ENCODE measurements at regions of chr5 and their contacts with region 1.

Region 1: DNA sequence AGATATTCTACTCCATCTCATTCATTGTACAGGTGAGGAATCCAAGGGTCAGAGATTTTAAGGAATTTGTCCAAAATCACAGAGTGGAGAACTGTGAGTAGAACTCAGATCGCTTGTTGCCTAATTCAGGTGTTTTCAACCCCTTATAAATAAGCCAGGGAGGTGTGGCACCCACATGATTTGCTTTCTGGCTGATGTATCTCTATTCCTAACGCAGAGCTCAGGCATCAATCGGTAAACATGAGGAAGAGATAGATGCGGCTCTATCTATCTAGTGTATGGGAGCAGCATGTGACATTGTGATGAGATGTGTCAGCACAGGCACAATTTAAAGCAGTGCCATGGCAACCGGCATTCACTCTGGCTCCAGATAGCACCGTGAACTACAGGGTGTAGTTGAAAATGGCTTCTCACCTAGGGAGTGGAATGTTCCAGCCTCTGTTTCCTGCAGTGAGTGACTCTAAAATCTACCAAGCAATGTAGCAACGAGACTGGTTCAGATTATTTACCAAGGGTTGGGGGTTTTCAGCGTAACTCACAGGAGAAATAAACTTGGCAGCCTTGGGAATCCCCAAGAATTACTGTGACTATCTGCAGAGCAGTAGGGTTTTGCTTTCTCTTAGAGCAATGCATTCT is 53.4 kb upstream of the SUB1 start:
- DNase-seq: peak; percentile 45
- H3K4me3 Mint-ChIP-seq: peak overlapping the region; percentile 88
- H3K27ac Mint-ChIP-seq: peak overlapping the region; percentile 96
- H3K4me1 Mint-ChIP-seq: peaks cover 48% of the 10 kb centered on the region
- H3K27me3 Mint-ChIP-seq: no peaks in the 10 kb centered on the region

Region 2: DNA sequence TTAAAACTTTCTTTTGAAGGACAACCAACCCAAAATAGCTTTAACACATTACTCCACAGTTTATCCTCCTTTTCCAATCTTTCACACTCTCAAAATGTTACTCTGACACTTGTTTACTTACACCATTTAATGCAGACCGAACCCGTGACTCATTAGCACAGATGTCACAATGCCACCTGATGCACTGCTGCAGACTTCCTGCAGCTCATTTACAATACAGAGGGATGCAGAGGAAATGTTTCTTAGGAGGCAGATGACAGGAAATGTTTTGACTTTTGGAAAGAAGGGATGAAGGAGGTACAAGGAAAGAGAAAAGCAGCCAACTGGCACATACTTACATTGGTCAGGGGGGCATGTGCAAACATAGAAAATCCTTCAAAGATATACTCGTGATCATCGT is 1039.1 kb before region 1 on chr5:
- intact Hi-C with region 1: no loop called
- DNase-seq: no peak
- H3K4me3 Mint-ChIP-seq: no peak overlapping the region
- H3K27ac Mint-ChIP-seq: no peak overlapping the region
- H3K4me1 Mint-ChIP-seq: no peaks in the 10 kb centered on the region
- H3K27me3 Mint-ChIP-seq: no peaks in the 10 kb centered on the region

Region 3: DNA sequence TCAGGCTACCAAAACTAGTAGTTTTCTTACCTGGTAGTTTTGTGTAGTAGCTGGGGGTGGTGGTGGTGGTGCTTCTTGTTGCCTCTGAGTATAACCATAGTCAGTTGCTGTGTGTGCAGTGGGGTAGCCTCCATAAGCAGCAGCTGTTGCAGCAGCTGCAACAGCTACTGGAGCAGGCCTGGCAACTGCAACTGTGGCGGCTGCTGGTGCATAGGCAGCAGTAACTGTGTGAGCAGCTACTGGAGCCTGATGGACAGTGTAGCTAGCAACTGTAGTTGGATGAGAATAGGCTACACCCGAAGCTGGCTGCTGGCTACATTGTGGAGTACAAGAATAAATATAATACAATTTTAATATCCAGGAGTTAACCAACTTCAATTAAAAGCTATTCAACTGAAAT is 112.2 kb before region 1 on chr5:
- intact Hi-C with region 1: no loop called
- DNase-seq: no peak
- H3K4me3 Mint-ChIP-seq: no peak overlapping the region
- H3K27ac Mint-ChIP-seq: no peak overlapping the region
- H3K4me1 Mint-ChIP-seq: peaks cover 15% of the 10 kb centered on the region
- H3K27me3 Mint-ChIP-seq: no peaks in the 10 kb centered on the region

Region 4: GRCh38 chr5:32444431-32445286 is 87.3 kb before region 1 on chr5 and contains the start of gene ZFR:
- intact Hi-C with region 1: loop called (anchors 5 kb)
- DNase-seq: peak; percentile 91
- H3K4me3 Mint-ChIP-seq: peak within 1 kb of the TSS; percentile 93
- H3K27ac Mint-ChIP-seq: peak within 1 kb of the TSS; percentile 93
- H3K4me1 Mint-ChIP-seq: peaks cover 30% of the 10 kb centered on the region
- H3K27me3 Mint-ChIP-seq: peaks cover 17% of the 10 kb centered on the region
- total RNA-seq, gene ZFR: 68.6 and 69.2 TPM in 2 replicates

Region 5: DNA sequence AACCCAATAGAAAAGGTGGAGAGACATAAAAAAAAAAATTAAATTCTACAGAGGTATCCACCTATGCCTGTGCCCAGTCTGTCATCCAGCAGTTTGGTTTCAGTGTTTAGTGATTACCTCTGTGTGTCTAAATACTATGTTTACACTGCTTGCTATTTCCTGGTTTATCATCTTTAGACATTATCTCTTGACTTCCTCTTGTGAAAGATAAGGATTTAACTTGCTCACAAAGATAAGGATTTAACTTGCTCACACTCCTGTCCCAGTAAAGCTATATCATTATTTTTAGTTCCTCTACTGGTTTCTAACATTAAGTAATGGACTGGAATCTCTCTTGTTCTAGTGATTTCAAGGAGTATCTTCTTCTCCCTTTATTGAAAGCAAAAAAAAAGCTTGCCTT is 33.5 kb before region 1 on chr5:
- intact Hi-C with region 1: loop called (anchors 5 kb)
- DNase-seq: no peak
- H3K4me3 Mint-ChIP-seq: no peak overlapping the region
- H3K27ac Mint-ChIP-seq: no peak overlapping the region
- H3K4me1 Mint-ChIP-seq: peaks cover 14% of the 10 kb centered on the region
- H3K27me3 Mint-ChIP-seq: no peaks in the 10 kb centered on the region

Region 6: DNA sequence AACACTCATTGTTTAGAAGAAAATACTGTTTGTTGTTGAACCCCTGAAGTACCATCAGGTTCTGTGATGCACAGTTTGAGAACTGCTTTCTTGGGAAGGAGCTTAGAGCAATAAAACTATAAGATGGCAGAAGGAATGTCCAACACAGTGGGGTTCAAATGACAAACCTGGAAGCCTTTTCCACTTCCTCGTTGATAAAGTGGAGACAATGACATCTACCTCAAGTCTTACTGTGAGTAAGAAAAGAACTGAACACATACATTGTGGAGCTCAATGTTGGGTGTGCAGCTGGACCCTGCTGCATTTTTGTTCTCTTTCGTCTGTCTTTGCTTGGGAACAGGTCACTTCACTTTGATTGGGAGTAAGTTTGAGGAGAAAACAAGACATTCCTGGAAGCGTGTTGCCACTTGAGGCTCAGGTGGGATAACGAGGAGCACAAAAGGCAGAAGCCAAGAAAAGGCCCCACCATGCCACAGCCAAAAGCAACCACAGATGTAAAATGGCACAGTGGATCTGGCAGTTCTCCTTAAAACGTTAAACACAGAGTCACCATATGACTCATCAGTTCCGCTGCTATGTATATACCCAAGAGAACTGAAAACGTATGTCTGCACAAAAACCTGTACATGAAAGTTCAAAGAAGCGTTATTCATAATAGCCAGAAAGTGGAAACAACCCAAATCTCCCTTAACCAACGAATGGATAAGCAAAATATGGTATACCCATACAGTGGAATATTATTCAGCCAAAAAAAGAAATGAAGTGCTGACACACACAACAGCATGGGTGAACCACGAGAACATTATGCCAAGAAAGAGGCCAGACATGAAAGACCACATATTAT is 10.4 kb after region 1 on chr5:
- intact Hi-C with region 1: loop called (anchors 1 kb)
- DNase-seq: peak; percentile 41
- H3K4me3 Mint-ChIP-seq: peak overlapping the region; percentile 54
- H3K27ac Mint-ChIP-seq: peak overlapping the region; percentile 96
- H3K4me1 Mint-ChIP-seq: peaks cover 45% of the 10 kb centered on the region
- H3K27me3 Mint-ChIP-seq: no peaks in the 10 kb centered on the region

Region 7: DNA sequence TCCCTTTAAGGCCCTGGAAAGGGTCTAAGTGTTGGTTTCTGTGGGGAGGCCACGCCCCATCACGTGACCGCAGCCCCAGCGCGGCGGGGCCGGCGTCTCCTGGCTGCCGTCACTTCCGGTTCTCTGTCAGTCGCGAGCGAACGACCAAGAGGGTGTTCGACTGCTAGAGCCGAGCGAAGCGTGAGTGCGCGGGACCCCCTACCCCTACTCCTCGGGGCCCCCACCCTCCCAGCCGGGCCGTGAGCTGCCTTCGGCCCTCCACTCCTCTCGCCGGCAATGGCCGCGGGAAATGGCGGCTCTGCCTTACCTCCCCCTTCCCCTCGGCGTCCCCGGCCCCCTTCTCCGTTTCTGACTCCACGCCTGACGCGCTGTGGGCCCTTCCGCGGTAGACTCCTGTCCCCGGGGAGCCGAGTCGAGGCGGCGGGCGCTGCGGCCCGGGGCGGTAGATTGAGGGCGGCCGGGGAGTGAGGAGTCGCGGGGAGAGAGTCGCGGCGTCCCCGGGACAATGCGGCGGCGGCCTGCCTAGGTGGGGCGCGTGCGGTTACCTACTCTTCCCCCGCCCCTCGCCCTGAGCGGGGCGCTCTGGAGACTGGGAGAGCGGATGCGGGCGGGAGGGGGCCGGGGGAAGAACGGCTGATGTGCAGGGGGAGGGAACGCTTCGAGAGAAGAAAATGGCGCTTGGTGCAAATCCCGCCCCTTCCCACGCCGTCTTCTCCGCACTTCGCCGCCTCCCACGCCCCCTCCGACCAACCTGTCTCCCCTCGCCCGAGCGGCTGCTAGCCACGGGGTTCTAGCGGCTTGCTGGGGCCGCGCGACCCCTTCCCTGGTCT is 53.7 kb after region 1 on chr5 and contains the start of gene SUB1:
- intact Hi-C with region 1: loop called (anchors 1 kb)
- DNase-seq: peak; percentile 90
- H3K4me3 Mint-ChIP-seq: peak within 1 kb of the TSS; percentile 96
- H3K27ac Mint-ChIP-seq: peak within 1 kb of the TSS; percentile 99
- H3K4me1 Mint-ChIP-seq: peaks cover 55% of the 10 kb centered on the region
- H3K27me3 Mint-ChIP-seq: no peaks in the 10 kb centered on the region
- total RNA-seq, gene SUB1: 380 and 404 TPM in 2 replicates